ENCODE measurements at regions of chr6 and their contacts with region 1.

Region 1: GRCh38 chr6:25266456-25267100 is 12.6 kb upstream of the CARMIL1 start:
- DNase-seq: no peak
- H3K4me3 ChIP-seq: no peak overlapping the region
- H3K27ac ChIP-seq: no peak overlapping the region
- H3K4me1 ChIP-seq: no peaks in the 10 kb centered on the region
- H3K27me3 ChIP-seq: no peaks in the 10 kb centered on the region
- CTCF ChIP-seq: no peak

Region 2: DNA sequence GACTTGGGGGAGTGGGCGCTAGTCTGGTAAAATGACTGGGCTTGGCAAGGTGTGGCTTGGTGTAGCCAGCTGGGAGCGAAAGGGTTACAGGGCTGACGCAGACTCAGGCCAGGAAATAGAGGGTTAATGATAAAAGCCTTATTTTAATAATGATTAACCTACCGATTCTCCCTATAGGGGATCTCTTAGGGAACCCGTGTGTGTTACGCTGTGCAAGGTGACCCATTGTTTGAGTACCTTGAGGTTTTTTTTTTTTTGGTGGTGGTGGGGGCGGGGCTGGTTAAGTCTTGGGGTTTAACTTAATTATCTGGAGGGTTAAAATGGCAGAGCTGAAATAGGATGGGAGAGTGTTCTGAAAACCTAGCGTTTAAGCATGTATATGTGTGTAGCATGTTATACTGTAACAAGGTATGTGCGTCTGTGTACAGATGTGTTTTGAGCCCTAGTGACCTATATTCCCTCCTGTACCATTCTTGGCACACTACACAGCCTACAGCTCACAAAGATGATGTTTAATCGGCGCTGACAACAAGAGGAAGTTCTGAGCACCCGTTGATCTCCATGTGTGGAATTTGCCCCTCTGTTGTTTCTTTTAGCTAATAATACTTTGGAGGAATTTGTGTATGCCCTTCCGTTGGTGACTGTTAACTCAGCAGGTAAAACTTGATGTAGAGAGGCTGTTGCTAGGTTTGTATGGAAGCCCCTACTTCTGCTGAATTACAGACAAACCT is 13.9 kb after region 1 on chr6:
- intact Hi-C with region 1: no loop called
- DNase-seq: peak; percentile 47
- H3K4me3 ChIP-seq: peak overlapping the region; percentile 74
- H3K27ac ChIP-seq: peak overlapping the region; percentile 83
- H3K4me1 ChIP-seq: no peaks in the 10 kb centered on the region
- H3K27me3 ChIP-seq: no peaks in the 10 kb centered on the region
- CTCF ChIP-seq: no peak

Region 3: DNA sequence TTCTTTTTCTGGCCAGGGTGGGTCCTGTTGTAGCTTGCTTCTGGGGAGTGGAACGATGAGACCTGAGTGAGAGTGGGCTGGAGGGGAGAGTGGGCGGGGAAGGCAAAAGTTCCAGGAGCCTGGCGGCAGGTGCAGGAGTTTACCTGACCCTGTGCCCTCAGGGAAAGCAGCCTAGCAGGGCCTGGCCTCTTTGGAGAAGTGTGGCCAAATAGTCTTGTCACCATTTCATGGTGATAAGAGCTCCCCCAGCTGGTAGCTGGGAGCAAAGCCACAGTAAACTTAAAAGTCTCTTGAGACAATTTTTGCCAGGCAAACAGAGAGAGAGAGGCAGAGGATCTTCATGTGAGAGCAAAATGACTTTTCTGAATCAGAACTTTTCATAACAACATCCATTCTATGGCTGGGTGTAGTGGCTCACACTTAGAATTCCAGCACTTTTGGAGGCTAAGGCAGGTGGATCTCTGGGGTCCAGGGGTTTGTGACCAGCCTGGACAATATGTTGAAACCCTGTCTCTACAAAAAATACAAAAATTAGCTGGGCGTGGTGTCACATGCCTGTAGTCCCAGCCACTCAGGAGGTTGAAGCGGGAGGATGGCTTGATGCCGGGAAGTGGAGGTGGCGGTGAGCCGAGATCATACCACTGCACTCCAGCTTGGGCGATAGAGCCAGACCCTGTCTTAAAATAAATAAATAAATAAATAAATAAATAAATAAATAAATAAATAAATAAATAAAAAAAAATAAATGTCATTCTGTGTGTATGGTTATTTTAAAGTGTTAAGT is 223.6 kb after region 1 on chr6:
- intact Hi-C with region 1: loop called (anchors 5 kb)
- DNase-seq: peak; percentile 86
- H3K4me3 ChIP-seq: no peak overlapping the region
- H3K27ac ChIP-seq: no peak overlapping the region
- H3K4me1 ChIP-seq: peaks cover 3% of the 10 kb centered on the region
- H3K27me3 ChIP-seq: no peaks in the 10 kb centered on the region
- CTCF ChIP-seq: peak; percentile 81

Region 4: DNA sequence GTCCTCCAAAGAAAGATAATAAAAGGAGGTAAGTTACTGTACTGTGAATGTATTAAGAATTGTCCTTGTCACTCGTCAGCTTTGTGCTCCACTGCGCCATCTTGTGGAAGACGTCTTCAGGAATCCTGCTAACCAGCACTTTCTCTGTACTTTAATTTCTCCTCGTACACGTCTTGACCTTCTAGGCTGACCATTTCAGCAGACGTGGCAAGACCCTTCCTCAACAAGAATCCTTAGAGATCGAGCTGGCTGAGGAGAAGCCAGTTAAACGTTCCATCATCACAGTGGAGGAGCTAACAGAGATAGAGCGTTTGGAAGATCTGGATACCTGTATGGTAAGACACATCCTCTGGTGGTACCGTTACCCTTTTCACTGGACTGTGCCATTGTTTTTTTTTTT is 289.9 kb after region 1 on chr6:
- intact Hi-C with region 1: loop called (anchors 5 kb)
- DNase-seq: peak; percentile 87
- H3K4me3 ChIP-seq: no peak overlapping the region
- H3K27ac ChIP-seq: no peak overlapping the region
- H3K4me1 ChIP-seq: no peaks in the 10 kb centered on the region
- H3K27me3 ChIP-seq: no peaks in the 10 kb centered on the region
- CTCF ChIP-seq: peak; percentile 67

Region 5: DNA sequence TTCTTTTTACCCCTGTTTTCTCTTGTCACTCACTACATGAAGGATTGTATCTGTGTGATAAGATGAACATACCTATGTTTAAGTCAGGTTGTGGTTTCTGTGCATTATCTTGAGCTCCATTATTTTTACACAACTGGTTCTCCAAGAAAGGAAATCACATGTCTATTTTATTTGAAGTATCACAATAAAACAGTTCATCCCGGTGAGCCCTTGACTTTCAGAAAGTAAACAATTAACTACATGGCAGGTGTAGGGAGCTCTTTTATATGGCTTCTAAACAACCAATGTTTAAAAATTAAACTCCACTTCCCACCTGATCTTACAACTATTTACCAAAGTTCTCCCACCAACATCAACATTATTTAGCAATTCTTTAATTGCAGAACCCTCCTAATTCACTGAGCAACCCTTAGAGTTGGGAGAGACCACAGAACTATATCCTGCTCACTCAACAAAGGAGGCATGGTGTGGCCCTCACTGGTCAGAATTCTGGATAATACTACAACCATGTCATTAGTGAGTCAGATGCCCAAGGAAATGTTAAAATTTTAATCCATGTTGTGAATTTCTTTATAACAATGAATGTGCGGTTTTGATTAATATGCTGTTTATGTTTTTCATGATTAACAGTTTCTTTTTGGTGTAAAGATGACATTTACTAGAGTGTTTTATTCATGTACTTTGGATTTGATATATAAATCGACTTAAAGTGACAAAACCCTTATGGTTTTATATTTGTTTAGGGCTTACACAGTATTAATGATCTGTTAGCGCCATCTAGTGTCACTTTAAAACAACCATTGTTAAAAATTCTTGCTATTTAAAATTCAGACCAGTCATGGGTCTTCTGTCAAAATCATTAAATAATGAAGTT is 335.5 kb after region 1 on chr6:
- intact Hi-C with region 1: loop called (anchors 5 kb)
- DNase-seq: no peak
- H3K4me3 ChIP-seq: no peak overlapping the region
- H3K27ac ChIP-seq: no peak overlapping the region
- H3K4me1 ChIP-seq: peaks cover 3% of the 10 kb centered on the region
- H3K27me3 ChIP-seq: no peaks in the 10 kb centered on the region
- CTCF ChIP-seq: peak; percentile 47